HEK293 (cell line): ENCODE measurements at regions of chr9 and their contacts with region 1.

Region 1: DNA sequence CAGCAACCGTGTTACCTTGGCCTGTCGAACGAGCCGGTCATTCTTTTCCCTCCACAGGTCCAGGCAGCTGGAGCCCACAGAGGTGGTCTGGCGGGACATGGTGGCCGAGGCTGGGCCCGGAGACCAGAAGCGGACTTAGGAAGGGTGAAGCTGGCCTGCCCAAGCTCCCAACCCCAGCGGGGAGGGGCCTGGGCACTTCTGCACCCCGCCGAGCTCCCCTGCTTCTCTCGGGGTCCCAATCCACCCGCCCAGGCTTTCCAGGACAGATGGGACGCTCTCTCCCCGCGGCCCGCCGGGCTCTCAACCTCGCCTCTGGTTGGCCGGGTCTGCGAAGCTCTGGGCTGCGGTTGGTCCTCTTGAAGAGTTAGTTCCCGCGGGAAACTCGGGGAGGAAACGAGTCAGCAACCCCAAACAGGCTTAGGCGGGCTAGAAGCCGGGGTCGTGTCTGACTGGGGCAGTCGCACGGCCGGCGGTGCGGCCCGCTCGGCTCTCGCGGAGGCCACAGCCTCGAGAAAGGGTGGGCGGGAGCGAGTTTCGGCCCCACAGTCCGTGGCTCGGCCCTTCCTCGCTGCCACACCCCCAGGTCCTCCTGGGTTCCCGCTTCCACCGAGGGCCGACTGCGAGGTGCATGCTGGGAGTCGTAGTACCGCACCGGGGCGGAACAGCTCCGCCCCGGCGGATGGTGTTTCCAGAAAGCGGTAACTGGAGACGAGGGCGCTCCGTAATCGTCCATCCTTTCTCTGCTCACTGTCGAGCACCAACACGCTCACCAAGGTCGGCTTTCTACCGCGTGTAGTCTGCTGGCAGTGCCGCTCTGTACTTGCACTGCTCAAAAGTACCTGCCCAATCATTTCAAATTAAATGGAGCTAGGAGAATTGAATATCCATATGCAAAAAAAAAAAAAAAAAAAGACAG is at the start of gene FANCG:
- H3K4me3 ChIP-seq: peak within 1 kb of the TSS; percentile 77
- H3K27ac ChIP-seq: peak within 1 kb of the TSS; percentile 84
- H3K4me1 ChIP-seq: no peaks in the 10 kb centered on the region
- CTCF ChIP-seq: peak; percentile 25; the same call in 1 of the 2 replicates

Region 2: DNA sequence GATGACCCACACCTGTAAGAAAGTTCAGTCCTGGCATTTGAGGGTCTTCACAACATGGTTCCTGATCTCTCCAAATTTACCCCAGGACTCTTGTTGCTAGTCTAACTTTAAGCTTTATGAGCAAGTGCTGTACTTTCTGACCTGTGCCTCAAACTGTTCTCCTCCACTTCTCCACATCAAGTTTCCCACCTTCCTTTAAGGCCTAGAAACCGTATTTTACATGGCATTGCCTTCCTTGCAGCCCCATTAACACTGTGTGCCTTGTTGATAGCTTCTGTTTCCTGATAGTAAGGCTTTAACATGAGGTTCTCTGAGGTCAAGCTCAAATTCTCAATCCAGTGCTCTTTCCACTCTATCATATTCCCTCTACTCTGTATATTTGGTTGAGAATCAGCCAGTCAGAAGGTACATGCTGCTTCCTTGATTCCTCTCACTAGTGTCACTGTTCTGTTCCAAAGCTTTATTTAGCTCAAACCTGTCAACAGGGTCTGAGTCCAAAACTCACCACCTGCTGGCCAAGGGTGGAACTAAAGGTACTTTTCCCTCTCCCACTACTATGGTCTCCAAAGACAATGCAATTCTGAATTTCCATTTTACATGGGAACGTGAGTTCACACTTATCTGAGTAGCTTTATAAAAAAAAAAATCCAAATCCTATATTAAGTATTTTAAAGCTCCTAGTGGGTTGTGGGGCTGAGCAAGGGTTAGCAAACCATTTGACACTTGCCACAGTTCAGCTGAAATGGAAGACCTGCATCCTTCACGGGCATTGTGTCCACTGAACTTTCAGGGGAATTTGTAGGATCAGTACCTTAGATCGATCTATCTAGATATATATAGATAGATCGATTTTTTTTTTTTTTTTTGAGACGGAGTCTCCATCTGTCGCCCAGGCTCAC is 28.4 kb before region 1 on chr9:
- CTCF ChIA-PET with region 1: interaction called, 4 read pairs
- POLR2A ChIA-PET with region 1: interaction called, 11 read pairs
- H3K4me3 ChIP-seq: no peak overlapping the region
- H3K27ac ChIP-seq: no peak overlapping the region
- H3K4me1 ChIP-seq: no peaks in the 10 kb centered on the region
- CTCF ChIP-seq: no peak

Region 3: GRCh38 chr9:35096035-35096849 is 16.6 kb after region 1 on chr9 and contains the start of gene PIGO:
- CTCF ChIA-PET with region 1: interaction called, 40 read pairs
- POLR2A ChIA-PET with region 1: interaction called, 73 read pairs
- H3K4me3 ChIP-seq: peak within 1 kb of the TSS; percentile 90
- H3K27ac ChIP-seq: peak within 1 kb of the TSS; percentile 84
- H3K4me1 ChIP-seq: no peaks in the 10 kb centered on the region
- CTCF ChIP-seq: peak; percentile 83

Region 4: DNA sequence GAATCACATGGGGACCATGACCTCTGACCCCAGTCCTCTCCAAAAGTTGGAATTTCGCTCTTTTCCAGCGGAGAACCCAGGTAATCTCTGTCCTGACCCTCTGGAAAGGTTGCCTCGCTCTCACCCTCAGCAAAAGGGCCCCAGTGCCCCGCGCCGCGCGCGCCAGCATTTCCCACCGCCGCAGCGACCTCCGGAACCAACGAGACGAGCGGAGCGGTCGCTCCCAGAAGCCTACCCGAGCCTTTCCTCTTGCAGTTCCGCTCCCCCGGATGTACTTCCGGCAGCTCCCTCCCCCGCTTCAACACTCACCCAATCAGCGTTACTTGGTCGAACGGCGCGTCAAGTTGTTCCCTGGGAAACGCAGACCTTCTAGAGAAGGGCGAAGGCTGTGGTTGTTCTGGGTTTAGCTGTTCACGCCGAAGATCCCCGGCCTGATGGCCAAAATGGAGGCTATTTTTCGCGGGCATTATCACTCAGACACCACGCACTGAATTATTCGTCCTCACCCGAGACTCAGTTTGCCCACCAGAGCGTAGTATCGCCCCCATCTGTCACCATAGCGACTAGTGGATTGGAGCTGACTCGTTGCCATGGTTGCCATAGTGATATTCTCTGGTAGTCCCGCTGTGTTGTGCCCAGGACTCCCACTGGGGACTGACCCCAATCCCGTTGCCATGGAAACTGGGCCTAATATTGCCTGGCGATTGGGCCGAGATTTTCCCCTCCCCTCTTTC is 23.4 kb after region 1 on chr9 and contains the start of gene STOML2:
- CTCF ChIA-PET with region 1: interaction called, 40 read pairs
- POLR2A ChIA-PET with region 1: interaction called, 73 read pairs
- H3K4me3 ChIP-seq: peak within 1 kb of the TSS; percentile 83
- H3K27ac ChIP-seq: peak within 1 kb of the TSS; percentile 66
- H3K4me1 ChIP-seq: no peaks in the 10 kb centered on the region
- CTCF ChIP-seq: no peak

Region 5: GRCh38 chr9:35225677-35226076 is 146.0 kb after region 1 on chr9:
- CTCF ChIA-PET with region 1: no interaction called
- POLR2A ChIA-PET with region 1: no interaction called
- H3K4me3 ChIP-seq: no peak overlapping the region
- H3K27ac ChIP-seq: no peak overlapping the region
- H3K4me1 ChIP-seq: no peaks in the 10 kb centered on the region
- CTCF ChIP-seq: no peak